ENCODE measurements at regions of chr6 and their contacts with region 1.

Region 1: DNA sequence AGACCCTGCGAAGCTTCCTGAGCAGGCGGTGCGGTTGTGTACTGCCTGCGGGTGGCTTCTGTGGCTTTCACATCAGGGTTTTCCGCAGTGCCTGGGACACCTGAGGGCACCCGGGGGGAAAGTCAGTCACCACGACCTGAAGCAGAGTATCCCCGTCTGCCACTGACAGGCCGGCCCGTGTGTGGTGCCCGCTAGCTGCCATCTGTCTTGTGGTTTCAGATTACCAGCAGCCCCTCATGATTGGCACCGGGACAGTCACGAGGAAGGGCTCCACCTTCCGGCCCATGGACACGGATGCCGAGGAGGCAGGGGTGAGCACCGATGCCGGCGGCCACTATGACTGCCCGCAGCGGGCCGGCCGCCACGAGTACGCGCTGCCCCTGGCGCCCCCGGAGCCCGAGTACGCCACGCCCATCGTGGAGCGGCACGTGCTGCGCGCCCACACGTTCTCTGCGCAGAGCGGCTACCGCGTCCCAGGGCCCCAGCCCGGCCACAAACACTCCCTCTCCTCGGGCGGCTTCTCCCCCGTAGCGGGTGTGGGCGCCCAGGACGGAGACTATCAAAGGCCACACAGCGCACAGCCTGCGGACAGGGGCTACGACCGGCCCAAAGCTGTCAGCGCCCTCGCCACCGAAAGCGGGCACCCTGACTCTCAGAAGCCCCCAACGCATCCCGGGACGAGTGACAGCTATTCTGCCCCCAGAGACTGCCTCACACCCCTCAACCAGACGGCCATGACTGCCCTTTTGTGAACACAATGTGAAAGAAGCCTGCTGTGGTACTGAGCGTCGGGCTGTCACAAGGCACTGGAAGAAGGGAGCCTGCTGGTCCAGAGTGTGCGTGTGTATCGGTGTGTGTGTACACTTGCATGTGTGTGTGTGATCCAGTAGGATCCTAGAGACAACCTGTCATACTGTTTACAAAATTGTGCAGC is 54.4 kb downstream of the GOPC start:
- DNase-seq: peak; percentile 79
- ATAC-seq: peak; percentile 85
- H3K4me3 Mint-ChIP-seq: peak overlapping the region; percentile 65
- H3K27ac Mint-ChIP-seq: no peak overlapping the region
- H3K4me1 Mint-ChIP-seq: peaks cover 30% of the 10 kb centered on the region
- H3K27me3 Mint-ChIP-seq: peaks cover 12% of the 10 kb centered on the region
- CTCF ChIP-seq: no peak

Region 2: GRCh38 chr6:117482240-117483003 is 65.5 kb before region 1 on chr6 and contains the start of gene DCBLD1:
- CTCF ChIA-PET with region 1: interaction called, 16 read pairs
- POLR2A ChIA-PET with region 1: no interaction called
- DNase-seq: peak; percentile 78
- ATAC-seq: peak; percentile 69
- H3K4me3 Mint-ChIP-seq: peak within 1 kb of the TSS; percentile 87
- H3K27ac Mint-ChIP-seq: peak within 1 kb of the TSS; percentile 74
- H3K4me1 Mint-ChIP-seq: peaks cover 48% of the 10 kb centered on the region
- H3K27me3 Mint-ChIP-seq: peaks cover 24% of the 10 kb centered on the region
- CTCF ChIP-seq: no peak
- total RNA-seq, gene DCBLD1: 9.6 to 11.2 TPM (median 10.6 TPM) in 3 replicates

Measured in WTC11 (cell line).